ENCODE measurements at regions of chr12 and their contacts with region 1.

Region 1: GRCh38 chr12:117190210-117190781 is at the start of gene FBXO21:
- DNase-seq: peak; percentile 90 to 98 (median 93)
- ATAC-seq: peak; percentile 96
- H3K4me3 ChIP-seq: peak within 1 kb of the TSS; percentile 49 to 87
- H3K4me3 Mint-ChIP-seq: peak within 1 kb of the TSS; percentile 93
- H3K27ac ChIP-seq: peak within 1 kb of the TSS; percentile 69 to 83
- H3K27ac Mint-ChIP-seq: peak within 1 kb of the TSS; percentile 92
- H3K4me1 ChIP-seq: peaks cover 22% of the 10 kb centered on the region
- H3K4me1 Mint-ChIP-seq: peaks cover 31% of the 10 kb centered on the region
- H3K27me3 ChIP-seq: no peaks in the 10 kb centered on the region
- H3K27me3 Mint-ChIP-seq: no peaks in the 10 kb centered on the region
- CTCF ChIP-seq: no peak
- total RNA-seq, gene FBXO21: 77.7 to 87.7 TPM

Region 2: DNA sequence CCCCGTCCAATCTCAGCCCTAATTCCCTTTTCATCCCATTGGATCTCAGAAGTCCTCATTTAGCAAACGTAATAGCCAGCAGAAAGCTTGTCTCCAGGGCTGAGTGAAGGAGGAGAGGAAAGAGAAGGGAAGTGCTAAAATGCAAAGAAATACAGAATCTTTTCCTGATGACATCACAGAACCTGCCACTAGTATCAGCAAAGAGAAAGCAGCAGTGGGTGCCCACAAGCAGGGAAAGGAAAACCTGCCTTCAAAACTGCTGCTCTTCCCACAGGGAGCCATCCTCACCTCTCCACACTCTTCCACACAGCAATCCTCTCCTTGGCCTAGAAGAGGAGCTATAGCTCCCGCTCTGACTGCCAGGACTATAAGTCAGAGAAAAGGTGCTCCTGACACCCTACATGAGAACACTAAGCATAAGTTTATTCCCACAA is 924.1 kb before region 1 on chr12:
- CTCF ChIA-PET with region 1: no interaction called
- POLR2A ChIA-PET with region 1: no interaction called
- intact Hi-C with region 1: no loop called
- DNase-seq: no peak
- ATAC-seq: no peak
- H3K4me3 ChIP-seq: no peak overlapping the region
- H3K4me3 Mint-ChIP-seq: no peak overlapping the region
- H3K27ac ChIP-seq: no peak overlapping the region
- H3K27ac Mint-ChIP-seq: no peak overlapping the region
- H3K4me1 ChIP-seq: peaks cover 65% of the 10 kb centered on the region
- H3K4me1 Mint-ChIP-seq: peaks cover 42% of the 10 kb centered on the region
- H3K27me3 ChIP-seq: no peaks in the 10 kb centered on the region
- H3K27me3 Mint-ChIP-seq: no peaks in the 10 kb centered on the region
- CTCF ChIP-seq: no peak

Region 3: GRCh38 chr12:117155278-117156060 is 34.8 kb before region 1 on chr12:
- CTCF ChIA-PET with region 1: no interaction called
- POLR2A ChIA-PET with region 1: no interaction called
- intact Hi-C with region 1: loop called in 1 of 2 experiments (anchors 2 kb)
- DNase-seq: peak; percentile 48 to 80 (median 72)
- ATAC-seq: peak; percentile 94
- H3K4me3 ChIP-seq: no peak overlapping the region
- H3K4me3 Mint-ChIP-seq: no peak overlapping the region
- H3K27ac ChIP-seq: no peak overlapping the region
- H3K27ac Mint-ChIP-seq: no peak overlapping the region
- H3K4me1 ChIP-seq: peaks cover 5% of the 10 kb centered on the region
- H3K4me1 Mint-ChIP-seq: peaks cover 13% of the 10 kb centered on the region
- H3K27me3 ChIP-seq: no peaks in the 10 kb centered on the region
- H3K27me3 Mint-ChIP-seq: no peaks in the 10 kb centered on the region
- CTCF ChIP-seq: peak; percentile 73

Region 4: DNA sequence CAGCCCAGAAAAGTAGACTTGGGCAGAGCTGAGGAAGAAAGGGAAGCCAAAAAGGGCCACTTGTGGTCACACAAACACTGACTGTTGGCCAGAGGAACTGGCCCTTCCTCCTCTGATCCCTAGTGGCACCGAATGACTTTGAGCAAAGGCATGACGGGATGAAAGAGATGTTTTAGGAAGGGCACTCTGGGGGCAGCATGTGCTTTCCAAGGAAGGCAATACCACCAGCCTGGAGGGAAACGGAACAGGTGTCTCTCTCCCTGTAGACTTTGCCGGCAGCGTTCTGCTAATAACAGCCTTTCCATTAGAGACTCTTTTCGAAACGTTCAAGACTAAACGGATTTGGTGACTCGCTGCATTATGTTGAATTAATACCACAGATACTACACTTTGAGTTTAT is 12.3 kb after region 1 on chr12:
- CTCF ChIA-PET with region 1: no interaction called
- POLR2A ChIA-PET with region 1: no interaction called
- intact Hi-C with region 1: no loop called
- DNase-seq: no peak
- ATAC-seq: no peak
- H3K4me3 ChIP-seq: no peak overlapping the region
- H3K4me3 Mint-ChIP-seq: no peak overlapping the region
- H3K27ac ChIP-seq: no peak overlapping the region
- H3K27ac Mint-ChIP-seq: no peak overlapping the region
- H3K4me1 ChIP-seq: no peaks in the 10 kb centered on the region
- H3K4me1 Mint-ChIP-seq: no peaks in the 10 kb centered on the region
- H3K27me3 ChIP-seq: peaks cover 0 to 3% of the 10 kb centered on the region in 2 experiments
- H3K27me3 Mint-ChIP-seq: peaks cover 15% of the 10 kb centered on the region
- CTCF ChIP-seq: no peak

Region 5: DNA sequence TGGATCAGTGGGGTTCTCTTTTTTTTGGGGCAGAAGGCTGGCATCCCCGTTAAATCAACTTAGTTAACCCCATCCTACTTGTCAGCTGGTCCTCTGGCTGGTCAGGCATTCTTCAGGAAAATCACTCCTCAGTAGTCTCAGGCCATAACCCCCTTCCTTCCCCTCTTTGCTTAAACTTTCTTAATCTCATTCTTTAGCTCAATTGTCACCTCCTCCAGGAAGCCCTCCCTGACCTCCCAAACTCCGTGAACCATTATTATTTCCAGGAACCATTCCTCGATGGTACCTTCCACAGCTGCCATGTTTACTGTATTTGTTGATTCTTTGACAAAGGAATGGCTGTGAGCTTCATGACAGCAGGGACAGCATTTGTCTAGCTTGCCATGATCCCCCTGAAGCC is 72.5 kb after region 1 on chr12:
- CTCF ChIA-PET with region 1: no interaction called
- POLR2A ChIA-PET with region 1: no interaction called
- intact Hi-C with region 1: no loop called
- DNase-seq: no peak
- ATAC-seq: no peak
- H3K4me3 ChIP-seq: no peak overlapping the region
- H3K4me3 Mint-ChIP-seq: no peak overlapping the region
- H3K27ac ChIP-seq: no peak overlapping the region
- H3K27ac Mint-ChIP-seq: no peak overlapping the region
- H3K4me1 ChIP-seq: no peaks in the 10 kb centered on the region
- H3K4me1 Mint-ChIP-seq: no peaks in the 10 kb centered on the region
- H3K27me3 ChIP-seq: no peaks in the 10 kb centered on the region
- H3K27me3 Mint-ChIP-seq: peaks cover 18% of the 10 kb centered on the region
- CTCF ChIP-seq: no peak

Region 6: DNA sequence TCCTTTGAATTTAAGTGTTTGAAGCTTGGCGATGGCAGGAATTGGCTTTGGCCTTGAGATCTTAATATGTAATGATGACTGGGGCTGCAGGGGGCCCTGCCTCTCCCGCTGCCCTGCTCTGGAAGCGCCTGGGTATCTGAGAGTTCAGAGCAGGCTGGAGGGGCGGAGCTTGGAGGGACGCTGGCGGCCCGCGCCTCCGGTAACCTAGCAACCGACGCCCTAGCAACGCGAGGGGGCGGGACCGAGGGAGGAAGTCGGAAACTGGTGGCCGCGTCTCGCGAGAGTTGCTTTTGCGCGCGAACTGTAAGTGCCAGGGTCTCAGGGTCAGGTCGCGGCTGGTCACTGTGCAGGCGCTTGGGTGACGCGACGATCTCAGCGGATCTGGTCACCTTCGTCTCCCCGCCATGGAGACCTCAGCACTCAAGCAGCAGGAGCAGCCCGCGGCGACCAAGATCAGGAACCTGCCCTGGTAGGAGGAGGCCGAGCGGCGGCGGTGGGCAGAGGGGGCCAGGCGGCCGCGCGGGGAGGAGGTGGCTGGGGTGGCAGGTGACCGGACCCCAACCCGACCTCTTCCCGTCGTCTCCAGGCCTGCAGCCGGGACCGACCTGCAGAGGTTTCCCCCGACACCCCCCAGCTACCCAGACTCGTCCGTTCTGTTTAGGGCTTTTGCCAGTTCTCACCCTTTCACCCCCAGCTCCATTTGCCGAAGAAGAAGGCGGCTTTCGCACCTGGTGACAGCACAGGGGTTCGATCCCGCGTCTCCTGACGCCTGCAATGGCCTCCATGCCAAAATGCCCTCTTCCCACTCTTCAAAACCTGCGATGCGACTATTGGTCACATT is 826.3 kb after region 1 on chr12 and contains the start of gene RFC5:
- CTCF ChIA-PET with region 1: no interaction called
- POLR2A ChIA-PET with region 1: no interaction called
- intact Hi-C with region 1: loop called in 1 of 2 experiments (anchors 10 kb)
- DNase-seq: peak; percentile 94 to 99 (median 98)
- ATAC-seq: peak; percentile 97
- H3K4me3 ChIP-seq: peak within 1 kb of the TSS; percentile 88 to 98
- H3K4me3 Mint-ChIP-seq: peak within 1 kb of the TSS; percentile 90
- H3K27ac ChIP-seq: peak within 1 kb of the TSS in 1 of 2 experiments; percentile 58
- H3K27ac Mint-ChIP-seq: peak within 1 kb of the TSS; percentile 90
- H3K4me1 ChIP-seq: peaks cover 19% of the 10 kb centered on the region
- H3K4me1 Mint-ChIP-seq: peaks cover 18% of the 10 kb centered on the region
- H3K27me3 ChIP-seq: no peaks in the 10 kb centered on the region
- H3K27me3 Mint-ChIP-seq: no peaks in the 10 kb centered on the region
- CTCF ChIP-seq: no peak
- total RNA-seq, gene RFC5: 9.9 to 13.8 TPM